Caco-2 (cell line): ENCODE measurements at regions of chr1 and their contacts with region 1.

Region 1: GRCh38 chr1:32933742-32934322 is 30.8 kb downstream of the RNF19B start:
- DNase-seq: peak; percentile 70 to 83
- H3K4me3 ChIP-seq: no peak overlapping the region
- H3K4me3 Mint-ChIP-seq: no peak overlapping the region
- H3K27ac Mint-ChIP-seq: peak overlapping the region; percentile 58
- H3K4me1 ChIP-seq: peaks cover 24% of the 10 kb centered on the region
- H3K4me1 Mint-ChIP-seq: peaks cover 24% of the 10 kb centered on the region
- H3K27me3 ChIP-seq: no peaks in the 10 kb centered on the region
- H3K27me3 Mint-ChIP-seq: no peaks in the 10 kb centered on the region
- CTCF ChIP-seq: no peak

Region 2: GRCh38 chr1:32948905-32949304 is 15.1 kb after region 1 on chr1:
- CTCF ChIA-PET with region 1: no interaction called
- POLR2A ChIA-PET with region 1: no interaction called
- intact Hi-C with region 1: loop called (anchors 2 kb)
- DNase-seq: peak in 1 of 2 experiments; percentile 13
- H3K4me3 ChIP-seq: no peak overlapping the region
- H3K4me3 Mint-ChIP-seq: peak overlapping the region; percentile 22
- H3K27ac Mint-ChIP-seq: no peak overlapping the region
- H3K4me1 ChIP-seq: peaks cover 36% of the 10 kb centered on the region
- H3K4me1 Mint-ChIP-seq: peaks cover 8% of the 10 kb centered on the region
- H3K27me3 ChIP-seq: no peaks in the 10 kb centered on the region
- H3K27me3 Mint-ChIP-seq: no peaks in the 10 kb centered on the region
- CTCF ChIP-seq: no peak

Region 3: DNA sequence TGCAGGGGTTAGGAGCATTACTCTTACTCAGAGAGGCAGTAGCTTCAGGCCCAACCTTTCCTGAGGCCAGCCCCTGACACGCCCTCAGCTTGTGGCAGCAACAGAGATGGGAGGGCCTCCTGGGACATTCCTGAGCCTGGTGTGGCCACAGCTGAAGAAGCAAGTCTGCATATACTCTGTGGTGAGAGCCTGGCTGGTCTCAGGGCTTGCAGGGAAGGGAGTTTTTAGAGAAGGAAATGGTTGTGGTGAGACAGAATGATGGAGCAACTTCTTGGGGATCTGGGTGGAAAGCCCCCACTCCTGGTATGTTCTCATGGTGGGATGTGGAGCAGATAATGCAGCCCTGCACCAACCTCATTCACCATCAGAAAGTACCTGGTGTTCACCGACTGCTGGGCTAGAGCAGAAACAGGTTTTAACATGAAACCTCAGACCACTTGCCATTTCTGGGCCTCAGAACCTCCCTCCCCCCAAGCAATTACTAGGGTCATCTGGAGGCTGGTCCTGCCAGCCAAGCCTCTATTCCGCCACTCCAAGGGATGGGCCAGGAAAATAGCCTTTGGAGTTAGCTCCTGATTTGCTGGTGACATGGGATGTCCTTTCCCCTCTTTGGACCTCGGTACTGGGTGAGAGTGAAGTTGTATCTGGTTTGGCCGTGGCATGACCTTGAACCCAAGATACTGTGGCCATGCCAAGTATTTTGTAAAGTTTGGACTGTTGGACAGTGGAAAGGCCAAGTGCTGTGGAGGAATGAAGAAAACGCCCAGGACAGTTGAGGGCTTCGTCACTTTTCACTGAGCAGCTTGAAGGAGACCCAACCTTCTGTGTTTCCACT is 58.9 kb after region 1 on chr1:
- CTCF ChIA-PET with region 1: no interaction called
- POLR2A ChIA-PET with region 1: no interaction called
- intact Hi-C with region 1: loop called (anchors 5 kb)
- DNase-seq: peak; percentile 79 to 87
- H3K4me3 ChIP-seq: no peak overlapping the region
- H3K4me3 Mint-ChIP-seq: peak overlapping the region; percentile 23
- H3K27ac Mint-ChIP-seq: peak overlapping the region; percentile 67
- H3K4me1 ChIP-seq: peaks cover 18% of the 10 kb centered on the region
- H3K4me1 Mint-ChIP-seq: peaks cover 9% of the 10 kb centered on the region
- H3K27me3 ChIP-seq: no peaks in the 10 kb centered on the region
- H3K27me3 Mint-ChIP-seq: no peaks in the 10 kb centered on the region
- CTCF ChIP-seq: no peak

Region 4: DNA sequence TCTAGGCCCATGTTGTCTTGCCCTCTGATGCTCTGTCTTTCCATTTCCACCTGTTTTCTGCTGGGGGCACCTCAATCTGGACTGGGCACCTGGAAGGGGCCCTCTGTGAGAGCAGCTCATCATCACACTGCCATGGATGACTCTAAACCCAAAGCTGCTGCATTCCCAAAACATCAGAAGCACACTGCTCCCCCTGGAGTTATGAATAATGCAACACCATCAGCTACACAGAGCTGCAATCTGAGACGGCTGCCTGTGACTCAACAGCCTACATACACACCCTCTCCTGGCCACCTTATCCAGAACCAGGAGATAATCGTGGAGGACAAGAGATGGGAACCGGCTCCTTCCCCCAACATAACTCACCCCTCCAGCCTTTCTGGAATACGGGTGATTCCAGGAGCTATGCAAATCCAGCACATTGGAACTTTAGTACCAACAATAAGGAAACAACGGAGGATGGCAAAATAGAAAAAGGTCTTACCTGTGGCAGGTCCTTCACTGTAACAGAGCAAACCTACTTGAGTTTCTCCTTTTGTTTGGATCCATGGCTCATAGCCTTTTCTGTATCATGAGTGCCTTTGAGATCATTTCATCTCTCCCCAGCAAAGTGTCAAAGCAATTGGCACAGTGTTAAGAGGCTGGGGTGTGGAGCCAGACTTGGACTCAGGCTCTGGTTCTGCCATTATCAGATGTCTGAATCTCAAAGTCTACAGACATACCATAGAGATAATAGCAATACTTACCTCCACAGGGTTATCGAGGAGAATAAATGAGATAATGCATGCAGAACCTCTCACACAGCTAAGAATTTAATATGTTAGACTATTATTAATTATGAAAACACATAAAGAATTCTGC is 73.6 kb after region 1 on chr1:
- CTCF ChIA-PET with region 1: interaction called, 8 read pairs
- POLR2A ChIA-PET with region 1: no interaction called
- intact Hi-C with region 1: loop called (anchors 2 kb)
- DNase-seq: peak; percentile 53 to 62
- H3K4me3 ChIP-seq: no peak overlapping the region
- H3K4me3 Mint-ChIP-seq: peak overlapping the region; percentile 30
- H3K27ac Mint-ChIP-seq: peak overlapping the region; percentile 83
- H3K4me1 ChIP-seq: peaks cover 49% of the 10 kb centered on the region
- H3K4me1 Mint-ChIP-seq: peaks cover 37% of the 10 kb centered on the region
- H3K27me3 ChIP-seq: no peaks in the 10 kb centered on the region
- H3K27me3 Mint-ChIP-seq: no peaks in the 10 kb centered on the region
- CTCF ChIP-seq: peak in 1 of 2 experiments; percentile 26

Region 5: GRCh38 chr1:33055210-33056008 is 121.6 kb after region 1 on chr1:
- CTCF ChIA-PET with region 1: interaction called, 5 read pairs
- POLR2A ChIA-PET with region 1: no interaction called
- intact Hi-C with region 1: loop called (anchors 1 kb)
- DNase-seq: peak; percentile 74 to 79
- H3K4me3 ChIP-seq: no peak overlapping the region
- H3K4me3 Mint-ChIP-seq: no peak overlapping the region
- H3K27ac Mint-ChIP-seq: no peak overlapping the region
- H3K4me1 ChIP-seq: no peaks in the 10 kb centered on the region
- H3K4me1 Mint-ChIP-seq: peaks cover 8% of the 10 kb centered on the region
- H3K27me3 ChIP-seq: no peaks in the 10 kb centered on the region
- H3K27me3 Mint-ChIP-seq: no peaks in the 10 kb centered on the region
- CTCF ChIP-seq: peak; percentile 56 to 57

Region 6: GRCh38 chr1:33219881-33220661 is 286.2 kb after region 1 on chr1:
- CTCF ChIA-PET with region 1: no interaction called
- POLR2A ChIA-PET with region 1: no interaction called
- intact Hi-C with region 1: no loop called
- DNase-seq: peak; percentile 62 to 77
- H3K4me3 ChIP-seq: no peak overlapping the region
- H3K4me3 Mint-ChIP-seq: peak overlapping the region; percentile 34
- H3K27ac Mint-ChIP-seq: peak overlapping the region; percentile 87
- H3K4me1 ChIP-seq: peaks cover 33% of the 10 kb centered on the region
- H3K4me1 Mint-ChIP-seq: peaks cover 23% of the 10 kb centered on the region
- H3K27me3 ChIP-seq: no peaks in the 10 kb centered on the region
- H3K27me3 Mint-ChIP-seq: no peaks in the 10 kb centered on the region
- CTCF ChIP-seq: no peak

Region 7: GRCh38 chr1:33327587-33328315 is 393.9 kb after region 1 on chr1:
- CTCF ChIA-PET with region 1: no interaction called
- POLR2A ChIA-PET with region 1: no interaction called
- intact Hi-C with region 1: no loop called
- DNase-seq: no peak
- H3K4me3 ChIP-seq: no peak overlapping the region
- H3K4me3 Mint-ChIP-seq: no peak overlapping the region
- H3K27ac Mint-ChIP-seq: no peak overlapping the region
- H3K4me1 ChIP-seq: no peaks in the 10 kb centered on the region
- H3K4me1 Mint-ChIP-seq: no peaks in the 10 kb centered on the region
- H3K27me3 ChIP-seq: no peaks in the 10 kb centered on the region
- H3K27me3 Mint-ChIP-seq: no peaks in the 10 kb centered on the region
- CTCF ChIP-seq: no peak